ENCODE measurements at regions of chr5 and their contacts with region 1.

Region 1: GRCh38 chr5:11182441-11183268 is 421.6 kb upstream of the DAP start:
- DNase-seq: no peak
- H3K4me3 ChIP-seq: no peak overlapping the region
- H3K27ac ChIP-seq: peak overlapping the region in 4 of 59 donors; percentile 10 to 49 (median 22)
- H3K27me3 ChIP-seq: no peaks in the 10 kb centered on the region
- CTCF ChIP-seq: peak; percentile 11 to 74 (median 60)

Region 2: DNA sequence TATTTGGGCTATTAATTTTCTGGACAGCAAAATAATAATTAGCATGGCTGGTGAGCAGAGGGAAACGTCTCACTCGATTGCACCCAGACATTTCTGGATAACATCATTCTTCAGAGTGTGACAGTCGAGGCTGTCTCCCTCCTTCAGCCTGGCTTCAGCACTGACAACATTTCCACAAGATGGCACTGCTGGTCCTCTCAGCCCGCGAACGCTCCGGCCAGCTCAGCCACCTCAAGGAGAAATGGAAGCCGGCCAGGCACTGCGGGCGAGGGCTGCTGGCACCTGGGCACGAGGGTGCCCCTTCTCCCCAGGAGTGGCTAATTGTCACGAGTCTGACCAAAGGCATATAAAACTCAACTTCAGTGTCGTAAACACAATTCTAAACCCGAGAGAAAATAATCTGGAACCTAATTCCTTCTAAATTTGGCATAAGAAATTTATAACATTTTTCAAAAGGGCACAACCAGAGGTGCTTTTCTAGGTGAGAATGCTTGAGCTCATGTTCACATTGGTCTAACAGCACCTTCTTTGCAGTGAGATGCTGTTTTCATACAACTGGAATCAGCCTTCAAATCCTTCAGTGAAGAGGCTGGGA is 487.5 kb before region 1 on chr5:
- intact Hi-C with region 1: loop called in 1 of 2 experiments (anchors 10 kb)
- DNase-seq: peak; percentile 61 to 85 (median 76)
- H3K4me3 ChIP-seq: peak overlapping the region in 42 of 59 donors; percentile 6 to 56 (median 38)
- H3K27ac ChIP-seq: peak overlapping the region in 5 of 59 donors; percentile 7 to 55 (median 25)
- H3K27me3 ChIP-seq: no peaks in the 10 kb centered on the region
- CTCF ChIP-seq: peak; percentile 58 to 91 (median 81)

Region 3: DNA sequence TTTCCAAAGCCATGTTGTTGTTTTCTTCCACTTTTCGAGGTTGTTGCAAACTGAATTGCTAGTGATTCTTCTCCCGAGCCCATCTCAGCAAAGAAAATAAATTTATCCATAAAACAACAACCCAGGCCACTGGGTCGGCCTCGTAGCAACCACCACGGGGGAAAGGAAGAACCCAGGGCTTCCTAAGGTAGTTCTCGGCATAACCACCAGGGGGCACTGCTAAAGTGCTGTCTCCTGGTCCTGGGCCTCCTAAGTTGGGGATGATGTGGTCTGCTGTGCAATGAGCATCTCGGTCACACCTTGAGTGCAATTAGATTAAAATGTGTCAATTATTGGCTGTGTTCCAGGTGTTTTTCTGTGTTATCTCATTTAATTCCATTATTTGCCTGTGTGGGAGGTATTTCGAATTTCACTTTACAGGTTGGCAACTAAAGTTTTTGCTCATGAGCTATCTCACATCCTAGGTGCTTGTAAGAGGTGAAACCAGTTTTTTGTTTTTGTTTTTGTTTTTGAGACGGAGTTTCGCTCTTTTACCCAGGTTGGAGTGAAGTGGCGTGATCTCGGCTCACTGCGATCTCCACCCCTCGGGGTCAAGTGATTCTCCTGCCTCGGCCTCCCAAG is 318.8 kb before region 1 on chr5:
- intact Hi-C with region 1: loop called in 1 of 2 experiments (anchors 2 kb)
- DNase-seq: peak in 5 of 10 donors; percentile 28 to 62 (median 54)
- H3K4me3 ChIP-seq: no peak overlapping the region
- H3K27ac ChIP-seq: no peak overlapping the region
- H3K27me3 ChIP-seq: no peaks in the 10 kb centered on the region
- CTCF ChIP-seq: peak; percentile 36 to 85 (median 72)

Region 4: DNA sequence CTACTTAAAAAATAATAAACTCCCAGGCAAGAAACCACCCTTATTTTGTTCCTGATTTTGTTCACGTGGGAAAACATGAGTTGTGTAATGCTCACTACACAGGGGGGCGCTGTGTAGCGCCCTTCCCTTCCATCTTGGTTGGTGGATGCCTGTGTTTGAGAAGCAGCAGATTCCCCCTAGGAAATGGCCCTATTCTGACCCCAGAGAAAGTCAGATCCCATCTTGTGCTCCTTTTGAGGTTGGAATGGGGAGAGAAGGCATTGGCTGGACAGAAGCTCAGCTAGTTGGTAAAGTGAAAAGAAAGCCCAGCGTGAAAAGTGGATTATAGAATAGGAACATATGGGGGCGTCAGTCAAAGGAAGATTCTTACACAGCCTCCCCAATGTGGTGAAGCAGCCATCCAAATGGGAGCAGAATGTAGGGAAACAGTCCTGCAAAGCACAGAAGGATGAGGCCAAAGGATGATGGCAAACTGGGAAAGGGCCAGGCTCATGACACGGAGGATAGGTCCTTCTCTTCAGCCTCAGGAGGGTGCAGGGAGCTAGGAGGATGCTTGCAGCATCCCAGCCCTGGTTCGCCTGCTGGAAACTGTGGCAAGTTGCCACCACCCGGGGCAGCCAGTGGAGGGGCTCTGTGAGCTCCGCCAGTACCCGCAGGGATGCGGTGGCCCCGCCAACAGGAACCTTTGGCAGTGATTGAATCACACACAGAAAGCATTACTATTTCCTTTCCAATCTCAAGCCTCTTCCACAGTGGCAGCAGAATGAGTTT is 107.4 kb before region 1 on chr5:
- intact Hi-C with region 1: loop called (anchors 10 kb)
- DNase-seq: peak; percentile 22 to 96 (median 56)
- H3K4me3 ChIP-seq: peak overlapping the region in 3 of 59 donors; percentile 7 to 28 (median 19)
- H3K27ac ChIP-seq: peak overlapping the region in 43 of 59 donors; percentile 7 to 75 (median 46)
- H3K27me3 ChIP-seq: no peaks in the 10 kb centered on the region
- CTCF ChIP-seq: peak in 39 of 56 donors; percentile 2 to 52 (median 26)